ENCODE measurements at regions of chr1 and their contacts with region 1.

Region 1: GRCh38 chr1:53485478-53486394 is 26.5 kb downstream of the DMRTB1 start:
- DNase-seq: peak; percentile 85
- H3K4me3 ChIP-seq: no peak overlapping the region
- H3K27ac ChIP-seq: no peak overlapping the region
- H3K4me1 ChIP-seq: peaks cover 0 to 7% (median 0%) of the 10 kb centered on the region in 4 donors
- H3K27me3 ChIP-seq: peaks cover 0 to 17% (median 6%) of the 10 kb centered on the region in 3 donors
- CTCF ChIP-seq: peak; percentile 69 to 85 (median 79)
- EP300 ChIP-seq: no peak
- POLR2A ChIP-seq: no peak

Region 2: GRCh38 chr1:53348486-53349368 is 137.0 kb before region 1 on chr1:
- intact Hi-C with region 1: no loop called
- DNase-seq: peak; percentile 45
- H3K4me3 ChIP-seq: no peak overlapping the region
- H3K27ac ChIP-seq: no peak overlapping the region
- H3K4me1 ChIP-seq: no peaks in the 10 kb centered on the region
- H3K27me3 ChIP-seq: no peaks in the 10 kb centered on the region
- CTCF ChIP-seq: no peak
- EP300 ChIP-seq: no peak
- POLR2A ChIP-seq: no peak

Region 3: DNA sequence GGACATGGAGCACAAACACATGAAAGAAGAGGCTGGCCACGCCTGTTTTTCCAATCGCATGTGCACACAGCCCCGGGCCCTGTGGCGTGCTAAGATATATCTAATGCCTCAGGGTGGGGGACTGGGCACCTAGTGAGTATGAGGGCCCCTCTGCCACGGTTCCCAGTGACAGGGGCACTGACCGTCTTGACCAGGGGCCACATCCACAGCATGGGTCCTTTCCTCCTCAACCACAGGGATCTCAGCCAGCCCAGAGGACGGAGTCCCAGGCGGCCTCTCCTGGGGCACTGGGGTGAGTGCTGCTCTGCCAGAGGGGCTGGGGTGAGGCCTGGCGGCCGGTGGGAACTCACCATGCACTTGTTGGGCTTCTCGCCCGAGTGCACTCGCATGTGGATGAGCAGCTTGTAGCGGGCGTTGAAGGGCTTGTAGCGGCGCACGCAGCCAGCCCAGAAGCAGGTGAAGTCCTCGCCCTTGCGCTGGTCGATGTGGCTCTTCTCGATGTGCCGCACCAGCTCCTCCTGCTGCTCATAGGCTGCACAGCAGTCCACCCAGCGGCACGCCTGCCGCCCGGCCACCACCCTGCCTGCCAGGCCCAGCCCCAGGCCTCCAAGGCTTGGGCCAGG is 108.1 kb after region 1 on chr1:
- intact Hi-C with region 1: loop called (anchors 1 kb)
- DNase-seq: peak; percentile 60
- H3K4me3 ChIP-seq: no peak overlapping the region
- H3K27ac ChIP-seq: no peak overlapping the region
- H3K4me1 ChIP-seq: peaks cover 0 to 5% (median 0%) of the 10 kb centered on the region in 4 donors
- H3K27me3 ChIP-seq: peaks cover 0 to 6% (median 5%) of the 10 kb centered on the region in 3 donors
- CTCF ChIP-seq: peak; percentile 17 to 57 (median 40)
- EP300 ChIP-seq: no peak
- POLR2A ChIP-seq: no peak

Region 4: GRCh38 chr1:53606651-53607051 is 120.9 kb after region 1 on chr1:
- intact Hi-C with region 1: no loop called
- DNase-seq: peak; percentile 53
- H3K4me3 ChIP-seq: no peak overlapping the region
- H3K27ac ChIP-seq: no peak overlapping the region
- H3K4me1 ChIP-seq: no peaks in the 10 kb centered on the region
- H3K27me3 ChIP-seq: no peaks in the 10 kb centered on the region
- CTCF ChIP-seq: no peak
- EP300 ChIP-seq: no peak
- POLR2A ChIP-seq: no peak

Region 5: GRCh38 chr1:53754484-53755312 is 269.0 kb after region 1 on chr1:
- intact Hi-C with region 1: loop called (anchors 2 kb)
- DNase-seq: no peak
- H3K4me3 ChIP-seq: no peak overlapping the region
- H3K27ac ChIP-seq: no peak overlapping the region
- H3K4me1 ChIP-seq: no peaks in the 10 kb centered on the region
- H3K27me3 ChIP-seq: no peaks in the 10 kb centered on the region
- CTCF ChIP-seq: peak; percentile 29 to 66 (median 47)
- EP300 ChIP-seq: no peak
- POLR2A ChIP-seq: no peak

Measured in sigmoid colon (tissue), 7 donors.